A673 (cell line): ENCODE measurements at regions of chr3 and their contacts with region 1.

Region 1: DNA sequence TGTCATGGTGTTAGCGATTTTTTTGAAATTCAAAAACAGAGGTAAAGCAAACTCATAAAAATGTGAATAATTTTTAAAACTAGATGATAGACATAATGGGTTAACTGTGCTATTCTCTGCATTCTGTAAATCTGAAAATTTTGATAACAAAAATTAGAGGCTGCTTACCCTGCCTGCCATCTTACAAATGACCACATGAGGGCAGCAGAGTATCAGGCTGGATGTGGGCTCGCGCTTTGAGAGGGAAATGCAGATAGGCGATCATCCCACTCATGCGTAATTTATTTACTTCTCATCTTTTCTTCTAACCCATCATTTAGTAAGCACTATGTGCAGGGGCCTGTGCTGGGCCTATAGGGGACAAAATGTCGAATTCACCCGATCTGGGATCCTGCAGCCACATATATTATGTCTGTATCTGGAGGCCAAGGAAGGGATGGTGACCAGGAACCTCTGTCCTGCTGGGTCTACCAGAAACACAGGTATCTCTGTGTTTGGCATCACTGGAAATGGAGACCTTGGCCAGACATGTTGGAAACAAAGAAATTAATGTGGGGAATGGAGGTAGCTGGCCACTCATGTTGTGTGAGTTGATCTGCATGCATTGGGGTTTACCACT is 7.8 kb upstream of the RAD18 start:
- DNase-seq: peak; percentile 74
- H3K4me3 ChIP-seq: no peak overlapping the region
- H3K27ac ChIP-seq: no peak overlapping the region
- H3K4me1 ChIP-seq: no peaks in the 10 kb centered on the region
- H3K27me3 ChIP-seq: no peaks in the 10 kb centered on the region
- CTCF ChIP-seq: peak; percentile 91

Region 2: GRCh38 chr3:9008550-9009255 is 37.6 kb after region 1 on chr3:
- CTCF ChIA-PET with region 1: no interaction called
- POLR2A ChIA-PET with region 1: no interaction called
- intact Hi-C with region 1: no loop called
- DNase-seq: no peak
- H3K4me3 ChIP-seq: no peak overlapping the region
- H3K27ac ChIP-seq: no peak overlapping the region
- H3K4me1 ChIP-seq: no peaks in the 10 kb centered on the region
- H3K27me3 ChIP-seq: no peaks in the 10 kb centered on the region
- CTCF ChIP-seq: no peak

Region 3: GRCh38 chr3:9067352-9067975 is 96.4 kb after region 1 on chr3:
- CTCF ChIA-PET with region 1: no interaction called
- POLR2A ChIA-PET with region 1: no interaction called
- intact Hi-C with region 1: loop called (anchors 5 kb)
- DNase-seq: peak; percentile 67
- H3K4me3 ChIP-seq: no peak overlapping the region
- H3K27ac ChIP-seq: no peak overlapping the region
- H3K4me1 ChIP-seq: no peaks in the 10 kb centered on the region
- H3K27me3 ChIP-seq: no peaks in the 10 kb centered on the region
- CTCF ChIP-seq: peak; percentile 93

Region 4: GRCh38 chr3:9153904-9154619 is 183.0 kb after region 1 on chr3:
- CTCF ChIA-PET with region 1: no interaction called
- POLR2A ChIA-PET with region 1: no interaction called
- intact Hi-C with region 1: no loop called
- DNase-seq: no peak
- H3K4me3 ChIP-seq: no peak overlapping the region
- H3K27ac ChIP-seq: no peak overlapping the region
- H3K4me1 ChIP-seq: no peaks in the 10 kb centered on the region
- H3K27me3 ChIP-seq: no peaks in the 10 kb centered on the region
- CTCF ChIP-seq: no peak

Region 5: GRCh38 chr3:9302425-9303181 is 331.5 kb after region 1 on chr3:
- CTCF ChIA-PET with region 1: interaction called, 5 read pairs
- POLR2A ChIA-PET with region 1: no interaction called
- intact Hi-C with region 1: loop called (anchors 1 kb)
- DNase-seq: peak; percentile 87
- H3K4me3 ChIP-seq: no peak overlapping the region
- H3K27ac ChIP-seq: no peak overlapping the region
- H3K4me1 ChIP-seq: no peaks in the 10 kb centered on the region
- H3K27me3 ChIP-seq: no peaks in the 10 kb centered on the region
- CTCF ChIP-seq: peak; percentile 90